ENCODE measurements at regions of chr11 and their contacts with region 1.

Region 1: GRCh38 chr11:117426269-117426685 is 98.6 kb downstream of the CEP164 start:
- DNase-seq: peak; percentile 63
- H3K4me3 Mint-ChIP-seq: no peak overlapping the region
- H3K27ac Mint-ChIP-seq: no peak overlapping the region
- H3K4me1 Mint-ChIP-seq: no peaks in the 10 kb centered on the region
- H3K27me3 Mint-ChIP-seq: peaks cover 32% of the 10 kb centered on the region
- CTCF ChIP-seq: peak; percentile 98

Region 2: DNA sequence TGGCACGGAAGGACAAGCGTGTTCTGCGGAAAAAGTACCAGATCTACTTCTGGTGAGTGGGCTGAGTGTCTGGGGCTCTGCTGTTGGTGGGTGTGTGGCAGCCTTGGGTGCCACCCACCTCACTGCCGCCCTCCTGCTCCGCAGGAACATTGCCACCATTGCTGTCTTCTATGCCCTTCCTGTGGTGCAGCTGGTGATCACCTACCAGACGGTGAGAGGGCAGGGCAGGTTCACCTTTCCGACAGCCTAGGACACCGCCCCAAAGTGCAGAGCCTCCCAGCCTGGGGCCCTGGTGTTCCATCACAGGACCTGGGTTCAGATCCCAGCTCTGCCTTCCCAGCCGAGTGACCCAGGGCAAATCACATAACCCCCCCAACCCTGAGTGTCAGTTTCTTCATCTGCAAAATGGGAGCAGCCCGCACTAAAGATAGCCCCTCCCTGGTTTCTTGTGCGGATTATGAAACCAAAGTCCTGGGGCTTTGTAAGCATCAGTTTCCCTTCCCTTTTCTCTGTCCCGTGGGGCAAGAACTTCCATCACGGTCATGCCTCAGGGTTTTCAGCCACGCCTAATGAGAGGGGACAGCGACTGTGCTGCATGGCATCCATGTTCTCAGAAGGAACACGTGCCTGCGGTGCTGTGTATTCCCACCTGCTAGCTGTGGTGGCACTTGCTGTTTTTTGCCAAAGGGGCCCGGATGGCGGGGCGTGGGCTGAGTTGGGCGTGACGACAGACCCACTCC is 236.9 kb before region 1 on chr11:
- CTCF ChIA-PET with region 1: no interaction called
- POLR2A ChIA-PET with region 1: no interaction called
- intact Hi-C with region 1: no loop called
- DNase-seq: no peak
- H3K4me3 Mint-ChIP-seq: no peak overlapping the region
- H3K27ac Mint-ChIP-seq: no peak overlapping the region
- H3K4me1 Mint-ChIP-seq: no peaks in the 10 kb centered on the region
- H3K27me3 Mint-ChIP-seq: no peaks in the 10 kb centered on the region
- CTCF ChIP-seq: no peak

Region 3: GRCh38 chr11:117390743-117391540 is 35.3 kb before region 1 on chr11:
- CTCF ChIA-PET with region 1: interaction called, 15 read pairs
- POLR2A ChIA-PET with region 1: no interaction called
- intact Hi-C with region 1: no loop called
- DNase-seq: no peak
- H3K4me3 Mint-ChIP-seq: no peak overlapping the region
- H3K27ac Mint-ChIP-seq: no peak overlapping the region
- H3K4me1 Mint-ChIP-seq: peaks cover 6% of the 10 kb centered on the region
- H3K27me3 Mint-ChIP-seq: no peaks in the 10 kb centered on the region
- CTCF ChIP-seq: no peak

Region 4: GRCh38 chr11:117484156-117484555 is 57.9 kb after region 1 on chr11:
- CTCF ChIA-PET with region 1: no interaction called
- POLR2A ChIA-PET with region 1: no interaction called
- intact Hi-C with region 1: no loop called
- DNase-seq: no peak
- H3K4me3 Mint-ChIP-seq: no peak overlapping the region
- H3K27ac Mint-ChIP-seq: no peak overlapping the region
- H3K4me1 Mint-ChIP-seq: no peaks in the 10 kb centered on the region
- H3K27me3 Mint-ChIP-seq: peaks cover 30% of the 10 kb centered on the region
- CTCF ChIP-seq: no peak

Region 5: GRCh38 chr11:117619026-117619425 is 192.7 kb after region 1 on chr11:
- CTCF ChIA-PET with region 1: interaction called, 11 read pairs
- POLR2A ChIA-PET with region 1: no interaction called
- intact Hi-C with region 1: loop called (anchors 10 kb)
- DNase-seq: no peak
- H3K4me3 Mint-ChIP-seq: no peak overlapping the region
- H3K27ac Mint-ChIP-seq: no peak overlapping the region
- H3K4me1 Mint-ChIP-seq: no peaks in the 10 kb centered on the region
- H3K27me3 Mint-ChIP-seq: peaks cover 55% of the 10 kb centered on the region
- CTCF ChIP-seq: no peak

Region 6: GRCh38 chr11:117796872-117797529 is 370.7 kb after region 1 on chr11 and contains the start of gene DSCAML1:
- CTCF ChIA-PET with region 1: interaction called, 10 read pairs
- POLR2A ChIA-PET with region 1: no interaction called
- intact Hi-C with region 1: no loop called
- DNase-seq: no peak
- H3K4me3 Mint-ChIP-seq: no peak within 1 kb of the TSS
- H3K27ac Mint-ChIP-seq: no peak within 1 kb of the TSS
- H3K4me1 Mint-ChIP-seq: no peaks in the 10 kb centered on the region
- H3K27me3 Mint-ChIP-seq: peaks cover 70% of the 10 kb centered on the region
- CTCF ChIP-seq: no peak
- total RNA-seq, gene DSCAML1: not detected in 2 replicates

Region 7: DNA sequence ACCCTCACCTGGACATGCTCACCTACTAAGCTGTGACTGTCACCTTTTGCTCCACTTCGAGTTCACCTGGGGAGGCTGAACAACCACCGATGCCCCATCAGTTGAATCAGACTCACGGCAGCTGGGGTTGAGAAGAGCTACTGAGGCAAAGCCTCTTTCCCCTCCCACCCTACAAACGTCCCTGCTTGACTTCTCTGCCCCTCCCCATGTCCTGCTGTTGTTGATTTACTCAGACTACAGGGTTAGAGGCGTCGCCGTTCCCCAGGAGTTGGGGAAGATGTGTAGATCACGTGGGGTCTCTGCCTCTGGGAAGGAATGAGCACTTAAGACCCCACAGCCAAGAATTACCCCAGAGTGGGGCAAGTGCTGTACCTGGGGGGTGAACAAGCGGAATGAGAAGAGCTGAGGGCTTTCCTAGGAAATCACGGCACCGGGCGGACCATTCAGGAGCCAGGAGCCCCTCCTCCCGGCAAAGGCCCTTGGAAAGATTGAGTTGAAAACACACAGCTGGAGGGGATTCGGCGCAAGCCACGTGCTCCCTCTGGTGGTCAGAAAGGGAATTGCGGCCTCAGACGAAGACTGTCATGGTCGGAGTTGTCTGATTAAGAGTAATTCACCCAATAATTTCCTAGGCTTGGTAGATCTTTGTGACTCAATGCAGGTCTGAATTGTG is 391.2 kb after region 1 on chr11:
- CTCF ChIA-PET with region 1: interaction called, 173 read pairs
- POLR2A ChIA-PET with region 1: interaction called, 6 read pairs
- intact Hi-C with region 1: loop called (anchors 1 kb)
- DNase-seq: peak; percentile 70
- H3K4me3 Mint-ChIP-seq: no peak overlapping the region
- H3K27ac Mint-ChIP-seq: peak overlapping the region; percentile 29
- H3K4me1 Mint-ChIP-seq: peaks cover 11% of the 10 kb centered on the region
- H3K27me3 Mint-ChIP-seq: no peaks in the 10 kb centered on the region
- CTCF ChIP-seq: peak; percentile 94

Measured in MCF 10A (cell line).